BJ (cell line): ENCODE measurements at regions of chr9 and their contacts with region 1.

Region 1: GRCh38 chr9:34591248-34591916 is 1.9 kb upstream of the CNTFR start:
- DNase-seq: no peak
- H3K4me3 ChIP-seq: no peak overlapping the region
- H3K27me3 ChIP-seq: peaks cover 54% of the 10 kb centered on the region
- CTCF ChIP-seq: peak; percentile 93

Region 2: GRCh38 chr9:34546834-34547827 is 44.3 kb before region 1 on chr9:
- CTCF ChIA-PET with region 1: interaction called, 119 read pairs
- POLR2A ChIA-PET with region 1: no interaction called
- DNase-seq: no peak
- H3K4me3 ChIP-seq: no peak overlapping the region
- H3K27me3 ChIP-seq: peaks cover 5% of the 10 kb centered on the region
- CTCF ChIP-seq: peak; percentile 71

Region 3: DNA sequence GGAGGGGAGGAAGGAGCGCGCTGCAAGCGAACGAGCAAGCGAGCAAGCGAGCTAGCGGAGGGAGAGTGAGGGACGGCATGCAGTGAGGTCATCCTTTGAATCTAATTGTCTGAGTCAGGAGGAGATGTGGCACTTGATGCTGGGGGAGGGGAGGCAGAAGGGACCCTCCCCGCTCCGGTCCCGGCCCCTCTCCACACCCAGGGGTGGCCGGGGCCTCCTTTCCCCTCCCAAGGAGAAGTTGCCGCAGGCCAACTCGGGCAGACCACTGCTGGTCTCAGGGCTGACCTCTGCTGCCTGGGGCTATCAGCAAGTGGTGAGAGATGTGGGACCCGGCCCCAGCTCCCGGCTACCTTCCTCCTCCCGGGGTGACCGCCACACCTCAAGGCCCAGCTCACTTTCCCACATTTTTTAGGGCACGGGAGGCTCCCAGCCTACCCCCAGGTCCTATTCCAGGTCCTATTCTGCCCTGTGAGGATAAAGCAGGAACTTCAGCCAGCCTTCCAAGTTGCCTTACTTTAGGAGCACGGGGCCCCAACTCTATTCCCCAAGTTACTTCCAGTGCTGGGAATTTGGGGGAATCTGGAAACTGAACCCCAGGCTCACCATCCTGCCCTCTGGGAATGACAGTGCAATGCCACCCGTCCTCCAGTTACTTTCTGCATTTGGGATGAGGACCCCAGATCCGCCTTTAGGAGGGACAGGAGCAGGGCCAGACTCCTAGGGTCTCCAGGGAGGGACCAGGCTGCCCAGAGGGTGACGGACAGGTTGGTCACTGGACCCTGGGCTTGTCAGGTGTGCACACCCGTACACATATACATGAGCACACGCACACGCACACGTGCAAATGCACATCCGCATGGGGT is 12.9 kb before region 1 on chr9:
- CTCF ChIA-PET with region 1: interaction called, 52 read pairs
- POLR2A ChIA-PET with region 1: no interaction called
- DNase-seq: no peak
- H3K4me3 ChIP-seq: no peak overlapping the region
- H3K27me3 ChIP-seq: peaks cover 38% of the 10 kb centered on the region
- CTCF ChIP-seq: no peak

Region 4: DNA sequence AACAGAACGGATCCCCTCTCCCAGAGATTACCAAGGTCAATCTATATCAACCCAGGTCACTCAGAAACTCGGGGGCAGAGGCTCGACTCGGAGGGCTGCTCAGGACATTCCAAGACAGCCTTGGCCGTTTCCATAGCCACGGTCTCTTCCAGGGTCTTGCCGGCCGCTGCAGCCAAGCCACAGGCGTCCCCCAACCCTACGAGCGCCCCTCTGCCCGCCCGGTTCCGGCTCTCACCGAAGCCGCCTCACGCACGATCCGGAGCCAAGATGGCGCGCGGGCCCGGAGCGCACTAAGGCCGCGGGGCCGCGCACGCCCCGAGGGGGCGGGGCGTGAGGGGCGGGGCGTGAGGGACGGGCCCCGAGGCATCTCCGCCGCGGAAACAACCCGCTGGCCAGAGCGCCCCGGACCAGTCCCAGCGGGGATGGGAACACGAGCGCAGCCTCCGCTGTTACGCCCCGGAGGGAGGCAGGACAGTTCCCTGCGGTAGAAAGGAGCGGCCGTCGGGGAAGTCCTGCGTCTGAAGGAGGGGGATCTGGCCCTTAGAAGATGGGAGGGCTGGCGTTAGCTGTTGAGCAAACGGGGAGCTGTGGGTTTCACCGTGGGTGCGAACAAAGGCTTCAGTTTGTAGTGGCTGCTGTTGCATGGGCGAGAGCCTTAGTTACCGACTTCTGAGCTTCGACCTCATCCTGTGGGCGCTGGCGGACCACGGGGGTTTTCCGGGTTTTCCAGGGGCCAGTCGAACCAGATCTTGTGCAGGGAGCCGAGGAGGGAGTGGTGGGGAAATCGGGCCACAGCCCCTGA is 20.6 kb after region 1 on chr9 and contains the start of gene RPP25L:
- CTCF ChIA-PET with region 1: interaction called, 12 read pairs
- POLR2A ChIA-PET with region 1: no interaction called
- DNase-seq: peak; percentile 19
- H3K4me3 ChIP-seq: peak within 1 kb of the TSS; percentile 70
- H3K27me3 ChIP-seq: no peaks in the 10 kb centered on the region
- CTCF ChIP-seq: no peak
- polyA plus RNA-seq, gene RPP25L: 32.9 and 38.8 TPM in 2 replicates